Caco-2 (cell line): ENCODE measurements at regions of chr1 and their contacts with region 1.

Region 1: GRCh38 chr1:159798893-159799292 is 3.3 kb upstream of the FCRL6 start:
- DNase-seq: peak; percentile 78 to 79
- H3K4me3 ChIP-seq: no peak overlapping the region
- H3K4me3 Mint-ChIP-seq: no peak overlapping the region
- H3K27ac Mint-ChIP-seq: no peak overlapping the region
- H3K4me1 ChIP-seq: no peaks in the 10 kb centered on the region
- H3K4me1 Mint-ChIP-seq: no peaks in the 10 kb centered on the region
- H3K27me3 ChIP-seq: no peaks in the 10 kb centered on the region
- H3K27me3 Mint-ChIP-seq: peaks cover 14% of the 10 kb centered on the region
- CTCF ChIP-seq: peak; percentile 69 to 84

Region 2: GRCh38 chr1:159839116-159839849 is 40.4 kb after region 1 on chr1:
- CTCF ChIA-PET with region 1: interaction called, 5 read pairs
- POLR2A ChIA-PET with region 1: no interaction called
- intact Hi-C with region 1: loop called (anchors 5 kb)
- DNase-seq: no peak
- H3K4me3 ChIP-seq: no peak overlapping the region
- H3K4me3 Mint-ChIP-seq: no peak overlapping the region
- H3K27ac Mint-ChIP-seq: no peak overlapping the region
- H3K4me1 ChIP-seq: no peaks in the 10 kb centered on the region
- H3K4me1 Mint-ChIP-seq: peaks cover 7% of the 10 kb centered on the region
- H3K27me3 ChIP-seq: no peaks in the 10 kb centered on the region
- H3K27me3 Mint-ChIP-seq: no peaks in the 10 kb centered on the region
- CTCF ChIP-seq: no peak

Region 3: DNA sequence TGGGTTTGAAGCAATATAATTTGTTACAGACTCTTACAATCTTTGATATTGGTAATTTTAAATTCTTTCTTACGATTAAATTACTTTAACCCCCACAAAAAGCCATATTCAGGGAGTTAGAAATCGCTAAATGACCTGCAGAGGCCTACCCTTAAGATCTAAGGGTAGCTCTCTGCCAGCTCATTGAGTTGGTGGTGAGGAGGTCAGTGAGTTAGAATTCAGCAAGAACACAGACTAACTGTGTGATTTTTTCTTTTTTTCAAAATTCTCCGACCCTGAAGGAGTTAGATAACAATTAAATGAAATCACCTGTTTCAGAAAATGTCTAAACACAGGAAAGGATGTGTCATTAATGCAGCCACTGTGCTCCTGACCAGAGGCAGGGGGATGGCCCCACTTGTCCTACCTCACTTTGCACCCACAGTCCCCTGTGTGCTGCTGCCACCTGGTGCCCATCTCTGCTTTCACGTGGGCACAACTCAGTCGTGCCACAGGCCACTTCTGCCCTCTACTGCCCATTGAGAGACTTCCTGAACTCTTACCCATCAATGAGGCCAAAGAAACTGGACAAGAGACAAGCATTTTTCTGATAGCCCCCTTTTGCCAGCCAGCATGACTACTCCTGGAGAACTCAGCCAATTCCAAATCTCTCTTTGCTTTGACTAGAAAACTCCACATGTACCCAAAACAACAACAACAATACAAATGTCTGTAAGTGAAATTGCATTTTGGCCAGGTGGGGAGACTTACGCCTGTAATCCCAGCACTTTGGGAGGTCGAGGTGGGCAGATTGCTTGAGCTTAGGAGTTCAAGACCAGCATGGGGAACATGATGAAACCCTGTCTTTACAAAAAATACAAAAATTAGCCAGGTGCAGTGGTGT is 92.6 kb after region 1 on chr1:
- CTCF ChIA-PET with region 1: interaction called, 75 read pairs
- POLR2A ChIA-PET with region 1: no interaction called
- intact Hi-C with region 1: loop called (anchors 1 kb)
- DNase-seq: peak; percentile 74 to 81
- H3K4me3 ChIP-seq: no peak overlapping the region
- H3K4me3 Mint-ChIP-seq: no peak overlapping the region
- H3K27ac Mint-ChIP-seq: no peak overlapping the region
- H3K4me1 ChIP-seq: peaks cover 16% of the 10 kb centered on the region
- H3K4me1 Mint-ChIP-seq: peaks cover 13% of the 10 kb centered on the region
- H3K27me3 ChIP-seq: no peaks in the 10 kb centered on the region
- H3K27me3 Mint-ChIP-seq: no peaks in the 10 kb centered on the region
- CTCF ChIP-seq: peak; percentile 86 to 97

Region 4: DNA sequence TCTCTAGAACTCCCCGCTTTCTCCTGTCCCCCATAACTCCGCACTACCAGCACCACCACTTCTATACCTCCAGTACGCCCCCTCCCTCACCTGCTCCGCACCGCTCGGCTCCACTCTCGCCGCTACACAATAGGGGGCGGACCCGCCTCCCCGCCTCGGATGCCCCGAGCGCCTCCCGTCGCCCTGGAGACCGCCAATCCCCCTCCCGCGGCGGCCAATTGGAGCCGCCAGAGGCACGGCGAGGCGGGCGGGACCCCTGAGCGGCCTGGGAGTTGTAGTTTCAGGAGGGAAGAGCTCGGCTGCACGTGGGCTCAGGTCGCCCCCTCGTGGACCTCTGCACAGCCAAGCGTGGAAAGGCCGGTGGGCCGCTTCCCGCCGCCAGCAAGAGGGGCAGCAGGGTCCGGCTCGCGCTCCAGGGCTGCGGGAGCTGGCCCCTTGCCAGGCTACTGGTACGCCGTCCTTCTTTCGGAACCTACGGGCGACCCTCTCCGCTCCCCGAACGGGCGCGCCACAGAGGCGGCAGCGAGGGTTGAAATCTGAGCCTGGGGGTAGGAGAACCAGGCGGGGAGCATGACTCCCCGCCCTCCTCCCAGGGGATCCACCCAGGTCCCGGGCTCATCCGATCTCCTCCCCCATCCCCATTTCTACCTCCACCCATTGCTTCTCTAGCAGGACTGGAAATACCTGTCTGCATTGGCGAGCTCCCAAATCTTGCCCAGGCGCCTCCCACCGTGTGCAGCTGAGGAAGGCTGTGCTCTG is 146.8 kb after region 1 on chr1 and contains the start of gene IGSF9:
- CTCF ChIA-PET with region 1: interaction called, 10 read pairs
- POLR2A ChIA-PET with region 1: interaction called, 3 read pairs
- intact Hi-C with region 1: loop called (anchors 2 kb)
- DNase-seq: peak; percentile 95 to 97
- H3K4me3 ChIP-seq: peak within 1 kb of the TSS; percentile 50
- H3K4me3 Mint-ChIP-seq: peak within 1 kb of the TSS; percentile 83
- H3K27ac Mint-ChIP-seq: peak within 1 kb of the TSS; percentile 68
- H3K4me1 ChIP-seq: peaks cover 56% of the 10 kb centered on the region
- H3K4me1 Mint-ChIP-seq: peaks cover 61% of the 10 kb centered on the region
- H3K27me3 ChIP-seq: no peaks in the 10 kb centered on the region
- H3K27me3 Mint-ChIP-seq: no peaks in the 10 kb centered on the region
- CTCF ChIP-seq: peak; percentile 74 to 80
- total RNA-seq, gene IGSF9: 19.6 and 21.2 TPM in 2 replicates